ENCODE measurements at regions of chr10 and their contacts with region 1.

Region 1: GRCh38 chr10:11594589-11595394 is 16.7 kb downstream of the USP6NL start:
- DNase-seq: no peak
- ATAC-seq: no peak
- H3K4me3 Mint-ChIP-seq: no peak overlapping the region
- H3K27ac Mint-ChIP-seq: no peak overlapping the region
- H3K4me1 Mint-ChIP-seq: peaks cover 3% of the 10 kb centered on the region
- H3K27me3 Mint-ChIP-seq: no peaks in the 10 kb centered on the region
- CTCF ChIP-seq: no peak

Region 2: GRCh38 chr10:11611248-11612020 is 16.6 kb after region 1 on chr10 and contains the start of gene USP6NL:
- CTCF ChIA-PET with region 1: interaction called, 12 read pairs
- POLR2A ChIA-PET with region 1: no interaction called
- intact Hi-C with region 1: no loop called
- DNase-seq: peak; percentile 47
- ATAC-seq: peak; percentile 42
- H3K4me3 Mint-ChIP-seq: peak within 1 kb of the TSS; percentile 82
- H3K27ac Mint-ChIP-seq: peak within 1 kb of the TSS; percentile 78
- H3K4me1 Mint-ChIP-seq: peaks cover 42% of the 10 kb centered on the region
- H3K27me3 Mint-ChIP-seq: peaks cover 4% of the 10 kb centered on the region
- CTCF ChIP-seq: no peak
- total RNA-seq, gene USP6NL: 2.3 to 2.5 TPM